ENCODE measurements at regions of chr7 and their contacts with region 1.

Region 1: DNA sequence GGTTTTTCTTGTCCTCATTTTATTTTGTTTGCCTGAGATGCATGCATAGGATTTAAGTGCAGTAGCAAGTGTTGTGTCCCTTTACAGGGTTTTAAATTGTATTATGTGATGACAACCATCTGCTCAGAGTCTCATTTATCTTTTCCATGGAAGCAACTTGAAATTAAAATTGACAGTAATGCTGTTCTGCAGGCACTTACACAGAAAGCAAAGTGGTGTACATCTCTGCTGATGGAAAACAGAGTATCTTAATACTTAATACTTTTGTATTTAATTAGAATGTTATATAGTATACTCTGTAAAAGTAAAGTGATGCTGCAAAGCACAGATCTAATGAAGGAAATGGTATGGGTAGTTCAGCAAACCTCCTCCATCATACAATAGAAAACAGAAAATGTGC is 482.9 kb downstream of the POM121L12 start:
- DNase-seq: no peak
- ATAC-seq: no peak
- H3K4me3 ChIP-seq: no peak overlapping the region
- H3K27ac ChIP-seq: no peak overlapping the region
- H3K4me1 ChIP-seq: no peaks in the 10 kb centered on the region
- H3K27me3 ChIP-seq: no peaks in the 10 kb centered on the region

Region 2: DNA sequence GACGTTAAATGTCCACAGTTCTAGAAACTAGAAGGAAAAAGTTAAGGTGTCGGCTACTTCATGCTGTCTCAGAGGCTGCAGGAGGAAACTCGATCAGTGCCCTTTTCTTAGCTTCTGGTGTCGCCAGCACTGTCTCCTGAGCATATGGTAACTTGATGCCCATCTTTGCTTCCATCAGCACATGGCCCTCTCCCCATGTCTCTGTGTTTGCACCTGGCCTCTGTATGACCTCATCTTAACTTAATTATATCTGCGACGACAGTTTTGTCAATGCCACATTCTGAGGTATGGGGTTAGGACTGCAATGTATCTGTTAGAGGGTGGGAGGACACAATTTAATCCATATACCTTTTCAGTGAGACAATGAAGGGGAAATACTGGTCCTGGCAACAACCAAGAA is 33.0 kb before region 1 on chr7:
- intact Hi-C with region 1: loop called in 1 of 4 experiments (anchors 1 kb)
- DNase-seq: no peak
- ATAC-seq: no peak
- H3K4me3 ChIP-seq: no peak overlapping the region
- H3K27ac ChIP-seq: no peak overlapping the region
- H3K4me1 ChIP-seq: no peaks in the 10 kb centered on the region
- H3K27me3 ChIP-seq: no peaks in the 10 kb centered on the region